ENCODE measurements at regions of chr2 and their contacts with region 1.

Region 1: DNA sequence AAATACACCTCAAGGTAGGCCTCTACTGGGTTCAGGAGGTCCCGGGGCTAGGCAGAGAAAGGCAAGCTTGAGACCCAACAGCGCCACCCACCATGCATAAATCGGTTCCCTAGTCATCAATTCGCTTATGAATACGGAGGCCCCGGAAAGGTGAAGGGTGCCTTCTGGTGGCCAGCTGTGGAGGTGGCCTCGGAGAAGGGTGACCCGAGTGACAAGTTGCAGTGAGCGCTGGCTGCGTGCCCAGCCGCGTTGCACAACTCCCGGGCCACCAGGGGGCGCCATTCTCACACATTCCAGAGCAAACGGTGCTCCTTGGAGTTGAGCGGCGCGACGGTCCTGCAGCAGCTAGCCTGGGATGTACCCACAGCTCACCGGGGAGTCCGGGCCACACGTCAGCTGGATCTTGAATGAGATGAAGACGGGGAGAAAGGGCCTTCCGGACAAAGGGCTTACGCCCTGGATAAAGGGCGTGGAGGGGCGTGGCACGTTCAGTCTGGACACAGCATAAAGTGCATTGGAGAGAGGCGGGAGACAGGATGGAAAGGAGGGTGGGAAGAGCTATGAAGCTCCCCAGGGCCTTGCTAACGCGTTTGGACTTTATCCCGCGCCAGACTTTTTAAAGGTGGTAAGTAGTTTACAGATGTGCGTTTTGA is 20.4 kb downstream of the TMSB10 start:
- DNase-seq: peak; percentile 98
- ATAC-seq: peak; percentile 87
- H3K4me3 ChIP-seq: peak overlapping the region; percentile 66 to 80 (median 74)
- H3K27ac ChIP-seq: peak overlapping the region; percentile 25
- H3K4me1 ChIP-seq: peaks cover 42% of the 10 kb centered on the region
- H3K27me3 ChIP-seq: no peaks in the 10 kb centered on the region
- CTCF ChIP-seq: peak; percentile 100
- EP300 ChIP-seq: peak; percentile 61 to 82; a peak in 3 of 4 replicates
- POLR2A ChIP-seq: no peak; a peak in 2 of 4 replicates
- RAD21 ChIP-seq: peak; percentile 100

Region 2: DNA sequence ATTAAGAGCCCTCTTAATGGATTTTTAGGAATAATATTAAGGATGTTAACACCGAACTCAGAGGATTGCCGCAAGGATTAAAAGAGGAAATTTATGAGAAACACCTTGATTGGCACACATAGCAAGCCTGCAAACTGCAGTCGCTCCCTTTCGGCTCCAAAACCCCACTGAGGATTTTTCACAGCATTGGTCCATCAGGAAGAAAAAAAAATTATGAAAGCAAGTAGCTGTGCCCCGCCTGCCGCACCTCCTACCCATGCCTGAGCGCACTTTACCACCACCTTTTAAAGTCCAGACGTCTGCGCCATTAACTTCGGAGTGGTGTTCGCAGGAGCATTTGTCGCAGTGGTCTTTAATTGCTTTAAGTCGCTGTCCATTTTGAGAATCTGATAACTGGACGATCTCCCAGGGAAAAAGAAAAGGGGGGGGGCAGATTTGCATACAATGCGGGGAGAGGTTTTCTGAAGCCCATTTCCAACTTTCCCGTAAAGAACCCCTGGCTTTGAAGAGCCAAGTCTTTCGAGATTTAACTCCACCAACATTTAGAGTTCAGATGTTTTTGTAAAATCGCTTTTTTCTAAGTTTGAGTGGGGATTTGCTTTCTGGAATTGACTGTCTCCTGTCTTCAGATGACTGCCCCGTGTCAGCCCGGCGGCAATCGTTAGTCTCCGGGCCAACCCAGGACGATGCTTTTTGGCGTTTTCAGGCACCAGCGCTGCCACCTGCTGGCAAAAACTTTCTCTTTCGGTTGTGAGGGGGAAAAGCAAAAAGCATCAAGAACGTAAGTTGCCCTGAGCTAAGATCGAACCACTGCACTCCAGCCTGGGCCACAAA is 44.1 kb before region 1 on chr2:
- CTCF ChIA-PET with region 1: interaction called, 20 read pairs
- POLR2A ChIA-PET with region 1: no interaction called
- in situ Hi-C with region 1: no loop called
- intact Hi-C with region 1: loop called (anchors 1 kb)
- DNase-seq: peak; percentile 73
- ATAC-seq: peak; percentile 81
- H3K4me3 ChIP-seq: peak overlapping the region in 2 of 3 experiments; percentile 37 to 63; a peak in 3 of 6 replicates
- H3K27ac ChIP-seq: no peak overlapping the region
- H3K4me1 ChIP-seq: peaks cover 40% of the 10 kb centered on the region
- H3K27me3 ChIP-seq: peaks cover 17 to 58% of the 10 kb centered on the region in 2 experiments
- CTCF ChIP-seq: peak; percentile 89
- EP300 ChIP-seq: no peak
- POLR2A ChIP-seq: no peak
- RAD21 ChIP-seq: peak; percentile 77

Region 3: DNA sequence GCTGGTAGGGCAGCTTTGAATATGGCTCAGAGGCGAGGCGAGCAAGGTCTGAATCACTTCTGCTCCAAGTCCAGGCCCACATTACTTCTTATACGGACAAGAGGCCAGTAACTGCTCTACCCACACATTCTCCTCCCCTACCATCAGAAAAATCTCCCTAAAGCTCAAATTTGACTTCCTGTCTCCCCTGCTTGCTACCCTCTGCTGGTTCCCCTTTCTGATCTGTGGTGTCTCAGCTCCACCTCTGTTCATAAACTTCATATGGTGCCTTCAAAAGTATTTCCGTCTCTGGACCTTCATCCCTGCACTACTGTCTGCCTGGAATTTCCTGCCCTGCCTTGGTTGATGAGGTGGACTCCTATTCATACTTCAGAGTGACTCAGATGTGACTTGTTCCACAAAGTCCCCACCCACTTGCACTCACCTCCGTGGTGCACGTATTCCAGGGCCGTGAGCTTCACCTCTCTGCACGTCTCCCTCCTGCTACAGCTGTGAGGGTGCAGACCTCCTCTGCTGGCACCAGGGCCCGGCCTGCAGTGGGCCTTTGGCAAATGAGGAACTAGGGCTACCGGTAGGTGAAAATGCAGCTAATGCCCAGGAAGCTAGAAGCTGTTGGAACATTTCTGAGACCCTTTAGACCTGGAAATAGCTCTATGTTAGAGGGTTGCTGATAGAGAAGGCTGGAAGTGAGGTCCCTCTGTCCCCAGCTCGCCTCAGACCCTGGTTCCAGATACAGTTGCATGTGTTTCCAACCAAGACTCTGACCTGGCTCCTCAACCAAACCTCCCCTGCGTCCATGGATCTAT is 20.6 kb after region 1 on chr2:
- CTCF ChIA-PET with region 1: interaction called, 3 read pairs
- POLR2A ChIA-PET with region 1: interaction called, 37 read pairs
- in situ Hi-C with region 1: no loop called
- intact Hi-C with region 1: loop called (anchors 2 kb)
- DNase-seq: peak; percentile 96
- ATAC-seq: peak; percentile 97
- H3K4me3 ChIP-seq: peak overlapping the region; percentile 18 to 62 (median 48); a peak in 5 of 6 replicates
- H3K27ac ChIP-seq: peak overlapping the region; percentile 71
- H3K4me1 ChIP-seq: peaks cover 57% of the 10 kb centered on the region
- H3K27me3 ChIP-seq: no peaks in the 10 kb centered on the region
- CTCF ChIP-seq: peak; percentile 49
- EP300 ChIP-seq: peak in 1 of 2 experiments; percentile 66; a peak in 2 of 4 replicates
- POLR2A ChIP-seq: peak in 1 of 2 experiments; percentile 87; a peak in 3 of 4 replicates
- RAD21 ChIP-seq: peak; percentile 29; the same call in 1 of the 2 replicates

Region 4: DNA sequence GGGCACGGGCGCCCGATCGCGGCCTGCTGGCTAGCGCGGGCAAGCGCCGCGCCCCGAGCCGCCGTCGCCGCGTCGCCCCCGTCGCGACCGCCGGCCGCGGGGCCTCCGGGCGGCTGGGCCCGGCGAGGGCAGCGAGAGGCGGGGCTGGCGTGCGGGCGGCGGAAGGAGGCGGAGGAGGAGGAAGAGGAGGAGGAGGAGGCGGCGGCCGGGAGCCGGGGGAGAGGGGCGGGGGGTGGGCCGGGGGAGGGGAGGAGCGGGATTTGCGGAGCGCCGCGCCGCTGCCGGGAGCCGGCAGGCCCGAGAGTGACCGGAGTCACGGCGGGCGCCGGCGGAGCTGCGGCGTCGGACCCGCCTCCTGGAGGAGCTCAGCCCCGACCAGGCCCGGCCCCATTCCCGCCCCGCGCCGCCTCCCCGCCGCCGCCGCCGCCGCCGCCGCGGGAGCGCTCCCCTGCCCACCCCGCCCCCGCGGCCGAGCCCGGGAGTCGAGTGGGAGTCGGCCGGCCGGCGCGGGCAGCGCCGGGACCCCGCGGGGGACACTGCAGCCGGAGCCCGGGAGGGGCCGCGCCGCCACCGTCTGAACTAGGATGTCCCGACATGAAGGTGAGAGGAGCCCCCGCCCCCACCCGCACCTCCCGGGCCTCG is 45.1 kb after region 1 on chr2 and contains the start of gene KCMF1:
- CTCF ChIA-PET with region 1: interaction called, 5 read pairs
- POLR2A ChIA-PET with region 1: interaction called, 28 read pairs
- in situ Hi-C with region 1: loop called (anchors 5 kb)
- intact Hi-C with region 1: loop called (anchors 1 kb)
- DNase-seq: no peak
- ATAC-seq: peak; percentile 70
- H3K4me3 ChIP-seq: peak within 1 kb of the TSS; percentile 81 to 99 (median 97)
- H3K27ac ChIP-seq: peak within 1 kb of the TSS; percentile 98
- H3K4me1 ChIP-seq: peaks cover 64% of the 10 kb centered on the region
- H3K27me3 ChIP-seq: no peaks in the 10 kb centered on the region; a peak in 1 of 5 replicates
- CTCF ChIP-seq: no peak
- EP300 ChIP-seq: no peak; a peak in 1 of 4 replicates
- POLR2A ChIP-seq: peak; percentile 9 to 68; a peak in 3 of 4 replicates
- RAD21 ChIP-seq: no peak
- total RNA-seq, gene KCMF1: 62.1 and 64.6 TPM in 2 replicates

Region 5: GRCh38 chr2:85017411-85018048 is 91.7 kb after region 1 on chr2:
- CTCF ChIA-PET with region 1: interaction called, 64 read pairs
- POLR2A ChIA-PET with region 1: no interaction called
- in situ Hi-C with region 1: loop called (anchors 5 kb)
- intact Hi-C with region 1: loop called (anchors 1 kb)
- DNase-seq: no peak
- ATAC-seq: no peak
- H3K4me3 ChIP-seq: no peak overlapping the region
- H3K27ac ChIP-seq: no peak overlapping the region
- H3K4me1 ChIP-seq: peaks cover 23% of the 10 kb centered on the region
- H3K27me3 ChIP-seq: no peaks in the 10 kb centered on the region
- CTCF ChIP-seq: peak; percentile 17; the same call in 1 of the 2 replicates
- EP300 ChIP-seq: no peak
- POLR2A ChIP-seq: no peak
- RAD21 ChIP-seq: no peak

Region 6: GRCh38 chr2:85032621-85033020 is 106.8 kb after region 1 on chr2:
- CTCF ChIA-PET with region 1: no interaction called
- POLR2A ChIA-PET with region 1: no interaction called
- in situ Hi-C with region 1: no loop called
- intact Hi-C with region 1: no loop called
- DNase-seq: no peak
- ATAC-seq: no peak
- H3K4me3 ChIP-seq: no peak overlapping the region
- H3K27ac ChIP-seq: no peak overlapping the region
- H3K4me1 ChIP-seq: no peaks in the 10 kb centered on the region
- H3K27me3 ChIP-seq: no peaks in the 10 kb centered on the region
- CTCF ChIP-seq: no peak
- EP300 ChIP-seq: no peak
- POLR2A ChIP-seq: no peak
- RAD21 ChIP-seq: no peak